MCF 10A (cell line): ENCODE measurements at regions of chr7 and their contacts with region 1.

Region 1: GRCh38 chr7:9029671-9030530 is 596.5 kb downstream of the NXPH1 start:
- DNase-seq: peak; percentile 2
- H3K4me3 Mint-ChIP-seq: no peak overlapping the region
- H3K27ac Mint-ChIP-seq: no peak overlapping the region
- H3K4me1 Mint-ChIP-seq: no peaks in the 10 kb centered on the region
- H3K27me3 Mint-ChIP-seq: peaks cover 81% of the 10 kb centered on the region
- CTCF ChIP-seq: no peak

Region 2: GRCh38 chr7:8998762-8999161 is 31.1 kb before region 1 on chr7:
- CTCF ChIA-PET with region 1: no interaction called
- POLR2A ChIA-PET with region 1: no interaction called
- intact Hi-C with region 1: loop called (anchors 5 kb)
- DNase-seq: no peak
- H3K4me3 Mint-ChIP-seq: no peak overlapping the region
- H3K27ac Mint-ChIP-seq: no peak overlapping the region
- H3K4me1 Mint-ChIP-seq: no peaks in the 10 kb centered on the region
- H3K27me3 Mint-ChIP-seq: peaks cover 77% of the 10 kb centered on the region
- CTCF ChIP-seq: no peak